HCT116 (cell line): ENCODE measurements at regions of chr4 and their contacts with region 1.

Region 1: DNA sequence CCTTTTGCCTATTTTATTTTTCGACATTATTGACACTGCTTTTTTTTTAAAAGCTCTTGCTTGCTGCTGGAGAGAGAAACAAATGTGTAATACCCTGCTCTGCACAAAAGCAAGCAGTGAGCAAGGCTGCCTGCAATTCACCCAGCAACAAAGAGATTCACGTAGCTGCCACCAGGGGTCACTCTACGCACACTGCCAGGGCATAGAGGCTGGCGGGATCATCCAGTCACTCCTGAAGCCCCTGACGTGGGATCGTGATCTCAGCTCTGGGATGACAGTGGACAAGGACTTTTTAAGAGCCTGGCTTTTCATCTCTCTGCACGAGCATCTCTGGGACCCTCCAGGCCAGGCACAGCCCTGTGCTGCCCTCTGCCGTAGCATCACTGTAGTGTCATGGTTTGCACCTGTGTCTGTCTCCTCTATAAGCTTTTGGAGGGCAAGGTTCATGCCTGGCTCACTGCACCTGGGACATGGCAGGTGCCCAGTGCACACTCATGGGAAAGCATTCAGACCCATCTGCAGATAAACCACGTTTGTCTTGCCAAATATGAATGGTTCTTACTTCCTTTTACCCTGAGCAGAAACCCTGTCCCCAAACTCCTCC is 19.8 kb downstream of the C4orf50 start:
- DNase-seq: peak; percentile 45
- ATAC-seq: peak; percentile 92
- H3K4me3 ChIP-seq: no peak overlapping the region
- H3K27ac ChIP-seq: no peak overlapping the region
- H3K4me1 ChIP-seq: peaks cover 0 to 7% of the 10 kb centered on the region in 2 experiments; a peak in 1 of 4 replicates
- H3K27me3 ChIP-seq: peaks cover 41% of the 10 kb centered on the region
- CTCF ChIP-seq: peak; percentile 97 to 99 (median 98)
- POLR2A ChIP-seq: no peak
- RAD21 ChIP-seq: peak; percentile 87

Region 2: GRCh38 chr4:5824635-5825034 is 173.8 kb before region 1 on chr4:
- CTCF ChIA-PET with region 1: interaction called, 14 read pairs
- POLR2A ChIA-PET with region 1: no interaction called
- RAD21 ChIA-PET with region 1: no interaction called
- intact Hi-C with region 1: no loop called
- DNase-seq: peak; percentile 23
- ATAC-seq: peak; percentile 50
- H3K4me3 ChIP-seq: no peak overlapping the region
- H3K27ac ChIP-seq: no peak overlapping the region
- H3K4me1 ChIP-seq: peaks cover 0 to 7% of the 10 kb centered on the region in 2 experiments; a peak in 1 of 4 replicates
- H3K27me3 ChIP-seq: peaks cover 17% of the 10 kb centered on the region
- CTCF ChIP-seq: peak; percentile 33 to 68 (median 67); a peak in 5 of 6 replicates
- POLR2A ChIP-seq: no peak
- RAD21 ChIP-seq: peak; percentile 51

Region 3: DNA sequence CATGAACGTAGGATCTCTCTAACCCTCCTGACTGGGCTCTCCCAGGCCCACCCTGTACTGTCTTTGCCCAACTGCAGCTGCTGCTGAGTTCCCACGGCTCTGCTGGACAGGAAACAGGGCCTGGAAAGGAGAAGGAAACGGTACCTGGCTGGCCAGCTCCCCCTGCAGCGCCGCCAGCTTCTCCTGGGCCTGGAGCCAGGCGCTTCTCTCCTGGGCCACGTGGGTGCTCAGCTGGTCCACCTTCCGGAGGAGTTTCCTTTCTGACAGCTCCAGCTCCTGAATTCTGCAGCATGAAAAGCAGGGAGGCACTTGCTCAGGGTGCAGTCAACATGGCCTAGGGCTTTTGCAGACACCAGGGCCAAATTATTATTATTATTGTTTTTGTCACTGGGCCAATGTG is 13.3 kb after region 1 on chr4:
- CTCF ChIA-PET with region 1: interaction called, 12 read pairs
- POLR2A ChIA-PET with region 1: no interaction called
- RAD21 ChIA-PET with region 1: no interaction called
- intact Hi-C with region 1: no loop called
- DNase-seq: no peak
- ATAC-seq: peak; percentile 40; the same call in 1 of the 2 replicates
- H3K4me3 ChIP-seq: no peak overlapping the region
- H3K27ac ChIP-seq: no peak overlapping the region
- H3K4me1 ChIP-seq: no peaks in the 10 kb centered on the region
- H3K27me3 ChIP-seq: 0 out of 2 replicates have a peak, but pooled peaks cover 5% of the 10 kb centered on the region
- CTCF ChIP-seq: no peak
- POLR2A ChIP-seq: no peak
- RAD21 ChIP-seq: no peak

Region 4: GRCh38 chr4:6019316-6020263 is 21.2 kb after region 1 on chr4:
- CTCF ChIA-PET with region 1: interaction called, 10 read pairs
- POLR2A ChIA-PET with region 1: no interaction called
- RAD21 ChIA-PET with region 1: no interaction called
- intact Hi-C with region 1: no loop called
- DNase-seq: peak; percentile 36
- ATAC-seq: peak; percentile 92
- H3K4me3 ChIP-seq: no peak overlapping the region
- H3K27ac ChIP-seq: no peak overlapping the region
- H3K4me1 ChIP-seq: no peaks in the 10 kb centered on the region
- H3K27me3 ChIP-seq: no peaks in the 10 kb centered on the region
- CTCF ChIP-seq: peak; percentile 67 to 93 (median 89)
- POLR2A ChIP-seq: no peak
- RAD21 ChIP-seq: peak; percentile 49

Region 5: DNA sequence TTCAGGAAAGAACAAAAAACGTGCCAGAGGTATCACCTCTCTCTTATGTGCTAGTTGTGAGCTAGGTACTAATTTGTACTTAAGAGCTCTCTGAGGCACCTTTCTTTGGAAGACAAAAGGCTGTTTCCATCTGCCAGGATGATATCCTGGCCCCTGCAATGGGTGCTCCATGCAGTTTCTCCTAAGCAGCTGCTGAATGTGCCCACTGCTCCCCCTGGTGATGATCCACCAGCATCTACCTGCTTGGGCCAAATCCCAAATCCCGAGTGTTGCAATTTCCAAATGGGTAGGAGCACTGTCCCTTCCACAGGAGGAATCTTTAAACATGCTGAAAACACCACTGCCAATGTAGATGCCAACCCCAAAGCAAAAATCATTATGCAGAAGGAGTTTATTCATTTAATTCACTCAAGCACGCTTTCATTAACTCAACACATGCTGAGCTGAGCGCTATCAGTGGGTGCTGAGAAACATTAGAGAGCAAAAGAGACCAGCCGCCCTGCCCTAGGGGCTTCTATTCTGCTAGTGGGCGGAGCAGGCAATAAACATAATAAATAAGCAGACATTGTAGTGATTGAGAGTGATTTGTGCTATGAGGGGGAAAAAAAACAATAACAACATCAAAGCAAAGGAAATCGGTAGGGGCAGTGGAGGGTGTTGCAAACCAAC is 89.4 kb after region 1 on chr4:
- CTCF ChIA-PET with region 1: interaction called, 45 read pairs
- POLR2A ChIA-PET with region 1: no interaction called
- RAD21 ChIA-PET with region 1: interaction called, 3 to 4 read pairs
- intact Hi-C with region 1: loop called (anchors 1 kb)
- DNase-seq: peak; percentile 51
- ATAC-seq: peak; percentile 93
- H3K4me3 ChIP-seq: no peak overlapping the region
- H3K27ac ChIP-seq: no peak overlapping the region
- H3K4me1 ChIP-seq: no peaks in the 10 kb centered on the region
- H3K27me3 ChIP-seq: peaks cover 22% of the 10 kb centered on the region
- CTCF ChIP-seq: peak; percentile 70 to 80 (median 74)
- POLR2A ChIP-seq: no peak
- RAD21 ChIP-seq: peak; percentile 73

Region 6: DNA sequence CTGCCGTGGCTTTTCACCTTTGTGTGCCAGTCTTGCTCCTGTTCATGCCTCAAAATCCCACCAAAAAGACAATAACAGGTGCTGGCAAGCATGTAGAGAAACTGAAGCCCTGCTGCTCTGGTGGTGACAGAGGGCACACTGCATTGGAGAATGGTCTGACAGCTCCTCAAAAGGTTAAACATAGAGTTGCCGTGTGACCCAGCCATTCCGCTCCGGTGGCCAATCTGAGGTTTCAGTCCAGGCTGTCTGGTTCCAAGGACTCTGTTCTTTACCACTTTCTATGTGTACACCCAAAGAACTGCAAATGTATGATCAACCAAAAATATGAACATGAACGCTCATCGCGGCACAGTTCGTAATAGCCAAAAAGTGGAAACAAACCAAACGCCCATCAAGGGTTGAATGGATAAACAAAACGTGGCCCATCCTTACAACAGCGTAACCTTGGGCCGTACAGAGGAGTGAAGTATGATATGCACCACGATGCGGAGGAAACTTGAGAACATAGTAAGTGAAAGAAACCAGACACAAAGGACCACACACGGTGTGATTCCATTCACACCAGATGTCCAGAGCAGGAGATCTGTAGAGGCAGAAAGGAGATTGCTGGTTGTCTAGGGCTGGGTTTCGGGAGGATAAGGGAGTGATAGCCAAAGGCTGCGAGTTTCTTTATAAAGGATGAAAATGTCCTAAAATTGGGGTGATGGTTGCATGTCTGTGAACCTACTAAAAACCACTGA is 237.6 kb after region 1 on chr4:
- CTCF ChIA-PET with region 1: no interaction called
- POLR2A ChIA-PET with region 1: no interaction called
- RAD21 ChIA-PET with region 1: no interaction called
- intact Hi-C with region 1: no loop called
- DNase-seq: no peak
- ATAC-seq: no peak
- H3K4me3 ChIP-seq: no peak overlapping the region
- H3K27ac ChIP-seq: no peak overlapping the region
- H3K4me1 ChIP-seq: no peaks in the 10 kb centered on the region
- H3K27me3 ChIP-seq: no peaks in the 10 kb centered on the region
- CTCF ChIP-seq: no peak
- POLR2A ChIP-seq: no peak
- RAD21 ChIP-seq: no peak

Region 7: DNA sequence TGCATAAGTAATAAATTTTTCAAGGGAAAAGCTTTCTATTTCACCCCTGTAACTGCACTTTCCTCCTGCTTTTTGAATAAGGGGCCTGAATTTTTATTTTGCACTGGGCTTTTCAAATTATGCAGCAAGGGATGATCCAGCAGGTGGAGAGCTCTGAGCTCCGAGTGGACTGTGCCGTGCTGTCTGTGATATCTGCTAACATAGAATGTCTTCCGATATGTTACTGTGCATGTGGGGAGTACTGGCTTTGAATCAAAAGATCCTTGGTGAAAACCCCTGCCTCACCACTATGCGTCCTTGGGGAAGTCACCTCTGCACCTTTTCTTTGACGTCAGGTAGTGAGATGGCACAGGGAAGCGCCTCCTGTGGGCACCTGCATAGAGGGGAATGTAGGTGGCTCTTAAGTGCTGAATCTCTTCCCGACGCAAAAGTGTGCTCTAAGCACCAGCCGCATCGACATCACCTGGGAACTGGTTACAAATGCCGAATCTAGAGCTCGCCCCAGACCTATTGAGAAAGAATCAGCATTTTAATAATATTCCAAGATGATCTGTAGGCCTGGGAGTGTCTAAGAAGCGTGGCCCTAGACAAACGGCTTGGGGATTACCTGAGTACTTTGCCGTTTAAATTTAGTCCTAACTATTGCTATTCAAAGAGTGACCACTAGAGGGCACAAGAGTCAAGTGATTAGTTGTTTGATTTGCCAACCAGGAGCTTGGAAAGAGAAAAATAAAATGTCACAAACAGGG is 252.0 kb after region 1 on chr4:
- CTCF ChIA-PET with region 1: interaction called, 14 read pairs
- POLR2A ChIA-PET with region 1: no interaction called
- RAD21 ChIA-PET with region 1: interaction called in 1 of 2 experiments, 4 read pairs
- intact Hi-C with region 1: no loop called
- DNase-seq: peak; percentile 76
- ATAC-seq: peak; percentile 93
- H3K4me3 ChIP-seq: peak overlapping the region; percentile 30 to 44
- H3K27ac ChIP-seq: no peak overlapping the region
- H3K4me1 ChIP-seq: peaks cover 3 to 6% of the 10 kb centered on the region in 2 experiments; a peak in 3 of 4 replicates
- H3K27me3 ChIP-seq: no peaks in the 10 kb centered on the region
- CTCF ChIP-seq: peak; percentile 55 to 92 (median 85); a peak in 5 of 6 replicates
- POLR2A ChIP-seq: no peak
- RAD21 ChIP-seq: peak; percentile 83